ENCODE measurements at regions of chr4 and their contacts with region 1.

Region 1: DNA sequence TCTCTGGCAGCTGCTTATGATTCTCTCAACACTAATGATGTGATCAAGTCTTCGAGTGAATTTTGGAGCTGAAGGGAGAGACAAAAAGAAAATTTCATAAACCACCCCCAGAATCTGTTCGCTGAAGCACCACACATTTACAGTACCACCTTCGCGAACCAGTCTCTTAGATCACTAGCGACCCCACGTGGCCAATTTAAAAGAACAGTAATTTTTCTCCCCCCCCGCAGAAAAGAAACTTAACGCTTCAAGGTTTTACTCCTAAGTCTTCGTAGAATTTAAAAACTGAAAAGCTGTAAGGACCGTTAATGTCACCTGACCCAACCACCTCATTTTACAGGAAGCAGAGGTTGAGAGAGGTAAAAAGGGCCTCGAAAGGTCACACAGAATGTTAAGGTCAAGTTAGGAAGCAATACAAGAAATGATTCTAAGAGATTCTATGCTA is 187.5 kb downstream of the QDPR start:
- DNase-seq: peak; percentile 29
- ATAC-seq: peak; percentile 70
- H3K4me3 ChIP-seq: no peak overlapping the region
- H3K27ac ChIP-seq: no peak overlapping the region
- H3K4me1 ChIP-seq: no peaks in the 10 kb centered on the region; a peak in 1 of 4 replicates
- H3K27me3 ChIP-seq: 0 out of 2 replicates have a peak, but pooled peaks cover 3% of the 10 kb centered on the region
- CTCF ChIP-seq: peak; percentile 61 to 83 (median 80)
- POLR2A ChIP-seq: no peak
- RAD21 ChIP-seq: peak; percentile 85

Region 2: GRCh38 chr4:16289897-16290554 is 1034.4 kb before region 1 on chr4:
- CTCF ChIA-PET with region 1: no interaction called
- POLR2A ChIA-PET with region 1: no interaction called
- RAD21 ChIA-PET with region 1: no interaction called
- intact Hi-C with region 1: loop called (anchors 5 kb)
- DNase-seq: peak; percentile 7
- ATAC-seq: peak; percentile 62; the same call in 1 of the 2 replicates
- H3K4me3 ChIP-seq: no peak overlapping the region
- H3K27ac ChIP-seq: no peak overlapping the region
- H3K4me1 ChIP-seq: no peaks in the 10 kb centered on the region
- H3K27me3 ChIP-seq: peaks cover 17% of the 10 kb centered on the region
- CTCF ChIP-seq: peak; percentile 32 to 70 (median 59); a peak in 4 of 6 replicates
- POLR2A ChIP-seq: no peak
- RAD21 ChIP-seq: peak; percentile 74

Region 3: GRCh38 chr4:16443504-16444088 is 880.8 kb before region 1 on chr4:
- CTCF ChIA-PET with region 1: no interaction called
- POLR2A ChIA-PET with region 1: no interaction called
- RAD21 ChIA-PET with region 1: no interaction called
- intact Hi-C with region 1: loop called (anchors 10 kb)
- DNase-seq: peak; percentile 12
- ATAC-seq: peak; percentile 73
- H3K4me3 ChIP-seq: no peak overlapping the region
- H3K27ac ChIP-seq: no peak overlapping the region
- H3K4me1 ChIP-seq: no peaks in the 10 kb centered on the region
- H3K27me3 ChIP-seq: 0 out of 2 replicates have a peak, but pooled peaks cover 8% of the 10 kb centered on the region
- CTCF ChIP-seq: peak; percentile 17 to 66 (median 64); a peak in 5 of 6 replicates
- POLR2A ChIP-seq: no peak
- RAD21 ChIP-seq: peak; percentile 47

Region 4: GRCh38 chr4:16642895-16643294 is 681.5 kb before region 1 on chr4:
- CTCF ChIA-PET with region 1: no interaction called
- POLR2A ChIA-PET with region 1: no interaction called
- RAD21 ChIA-PET with region 1: no interaction called
- intact Hi-C with region 1: loop called (anchors 2 kb)
- DNase-seq: no peak
- ATAC-seq: 0 out of 2 replicates have a peak, but pooled peaks have one; percentile 62
- H3K4me3 ChIP-seq: no peak overlapping the region
- H3K27ac ChIP-seq: no peak overlapping the region
- H3K4me1 ChIP-seq: no peaks in the 10 kb centered on the region
- H3K27me3 ChIP-seq: peaks cover 3% of the 10 kb centered on the region; the same call in 1 of the 2 replicates
- CTCF ChIP-seq: no peak
- POLR2A ChIP-seq: no peak
- RAD21 ChIP-seq: peak; percentile 11; the same call in 1 of the 2 replicates

Region 5: DNA sequence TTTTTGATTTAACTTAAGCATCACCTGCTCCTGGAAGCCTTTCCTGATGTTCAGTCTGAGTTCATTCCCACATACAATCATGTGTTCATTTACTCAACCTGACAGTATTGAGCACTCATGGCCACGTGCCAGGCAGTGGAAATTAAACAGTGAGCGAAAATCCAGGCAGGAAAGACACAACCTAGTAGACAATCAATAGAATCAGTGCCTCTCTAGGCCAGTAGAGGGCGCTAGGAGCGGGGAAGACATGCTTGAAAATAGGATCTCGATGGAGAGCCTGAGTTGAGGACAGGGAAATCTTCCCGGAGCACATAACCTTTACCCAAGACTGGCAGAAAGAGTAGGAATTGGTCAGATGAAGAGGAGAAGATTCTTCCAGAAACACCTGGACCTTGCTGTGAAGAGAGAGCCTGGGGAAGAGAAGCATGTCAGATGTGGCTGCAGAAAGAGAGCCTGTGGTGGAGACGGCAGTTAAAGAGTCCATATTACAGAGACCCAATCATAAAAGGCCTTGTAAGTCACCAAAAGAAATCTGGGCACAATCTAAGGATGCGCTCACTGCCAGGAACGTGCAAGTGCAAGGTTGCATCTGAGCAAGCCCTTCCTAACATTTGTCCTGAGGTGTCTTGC is 529.5 kb before region 1 on chr4:
- CTCF ChIA-PET with region 1: no interaction called
- POLR2A ChIA-PET with region 1: no interaction called
- RAD21 ChIA-PET with region 1: no interaction called
- intact Hi-C with region 1: loop called (anchors 1 kb)
- DNase-seq: peak; percentile 34
- ATAC-seq: peak; percentile 60
- H3K4me3 ChIP-seq: no peak overlapping the region
- H3K27ac ChIP-seq: no peak overlapping the region
- H3K4me1 ChIP-seq: no peaks in the 10 kb centered on the region
- H3K27me3 ChIP-seq: peaks cover 12% of the 10 kb centered on the region; the same call in 1 of the 2 replicates
- CTCF ChIP-seq: peak; percentile 47 to 81 (median 77); a peak in 5 of 6 replicates
- POLR2A ChIP-seq: no peak
- RAD21 ChIP-seq: peak; percentile 54

Region 6: GRCh38 chr4:16916719-16917337 is 407.6 kb before region 1 on chr4:
- CTCF ChIA-PET with region 1: interaction called, 9 read pairs
- POLR2A ChIA-PET with region 1: no interaction called
- RAD21 ChIA-PET with region 1: interaction called in 1 of 2 experiments, 3 read pairs
- intact Hi-C with region 1: loop called (anchors 1 kb)
- DNase-seq: peak; percentile 70
- ATAC-seq: peak; percentile 96
- H3K4me3 ChIP-seq: no peak overlapping the region
- H3K27ac ChIP-seq: no peak overlapping the region
- H3K4me1 ChIP-seq: no peaks in the 10 kb centered on the region
- H3K27me3 ChIP-seq: no peaks in the 10 kb centered on the region
- CTCF ChIP-seq: peak; percentile 97 to 98 (median 98)
- POLR2A ChIP-seq: no peak
- RAD21 ChIP-seq: peak; percentile 75

Region 7: GRCh38 chr4:18318682-18319388 is 994.4 kb after region 1 on chr4:
- CTCF ChIA-PET with region 1: no interaction called
- POLR2A ChIA-PET with region 1: no interaction called
- RAD21 ChIA-PET with region 1: no interaction called
- intact Hi-C with region 1: no loop called
- DNase-seq: no peak
- ATAC-seq: no peak
- H3K4me3 ChIP-seq: no peak overlapping the region
- H3K27ac ChIP-seq: no peak overlapping the region
- H3K4me1 ChIP-seq: no peaks in the 10 kb centered on the region
- H3K27me3 ChIP-seq: no peaks in the 10 kb centered on the region
- CTCF ChIP-seq: no peak
- POLR2A ChIP-seq: no peak
- RAD21 ChIP-seq: no peak

Measured in HCT116 (cell line).